Activated naive CD4-positive, alpha-beta T cell treated with anti-CD3 and anti-CD28 coated beads for 36 hours (primary cell): ENCODE measurements at regions of chr11 and their contacts with region 1.

Region 1: DNA sequence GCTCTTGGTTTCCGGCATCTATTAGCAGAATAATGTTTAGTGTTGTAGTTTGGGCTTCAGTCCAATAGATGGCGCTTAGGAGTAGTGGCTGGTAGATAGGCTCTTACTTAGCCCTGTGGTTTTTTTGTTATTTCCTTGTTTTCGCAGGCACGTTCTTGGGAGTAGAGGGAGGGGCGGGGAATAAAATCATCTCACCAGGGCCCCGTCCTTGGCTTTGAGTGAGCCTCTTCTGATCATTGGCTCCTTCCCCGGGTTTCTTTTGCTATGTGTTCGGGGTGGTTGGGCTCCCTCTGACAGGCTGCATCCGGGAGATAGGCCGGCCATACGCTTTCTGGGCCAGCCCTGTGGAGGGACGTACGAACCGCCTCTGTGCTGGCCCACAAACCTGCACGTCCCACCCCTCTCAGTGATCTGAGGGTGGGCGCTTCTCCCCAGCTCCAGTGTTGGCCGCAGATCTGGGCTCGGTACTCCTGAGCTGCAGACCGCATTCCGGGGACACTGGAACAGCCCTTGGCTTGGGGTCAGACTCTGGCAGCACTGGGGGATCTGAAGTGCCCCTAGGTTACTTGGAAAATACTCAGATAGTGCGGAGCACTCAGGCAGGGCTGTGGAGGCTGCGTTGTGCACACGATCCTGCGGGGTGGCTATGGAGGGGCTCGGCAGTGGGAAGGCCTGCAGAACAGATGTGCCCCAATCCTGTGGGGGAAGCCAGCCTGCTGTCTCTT is 217.0 kb downstream of the DYNC2H1 start:
- DNase-seq: peak; percentile 37
- H3K4me3 Mint-ChIP-seq: no peak overlapping the region
- H3K27ac Mint-ChIP-seq: no peak overlapping the region
- H3K4me1 Mint-ChIP-seq: peaks cover 4% of the 10 kb centered on the region
- H3K27me3 Mint-ChIP-seq: peaks cover 5% of the 10 kb centered on the region

Region 2: GRCh38 chr11:103108933-103109817 is 217.1 kb before region 1 on chr11 and contains the start of gene DYNC2H1:
- CTCF ChIA-PET with region 1: no interaction called
- intact Hi-C with region 1: loop called (anchors 5 kb)
- DNase-seq: peak; percentile 90
- H3K4me3 Mint-ChIP-seq: peak within 1 kb of the TSS; percentile 84
- H3K27ac Mint-ChIP-seq: peak within 1 kb of the TSS; percentile 72
- H3K4me1 Mint-ChIP-seq: peaks cover 7% of the 10 kb centered on the region
- H3K27me3 Mint-ChIP-seq: no peaks in the 10 kb centered on the region
- total RNA-seq, gene DYNC2H1: 1.9 to 2.8 TPM

Region 3: DNA sequence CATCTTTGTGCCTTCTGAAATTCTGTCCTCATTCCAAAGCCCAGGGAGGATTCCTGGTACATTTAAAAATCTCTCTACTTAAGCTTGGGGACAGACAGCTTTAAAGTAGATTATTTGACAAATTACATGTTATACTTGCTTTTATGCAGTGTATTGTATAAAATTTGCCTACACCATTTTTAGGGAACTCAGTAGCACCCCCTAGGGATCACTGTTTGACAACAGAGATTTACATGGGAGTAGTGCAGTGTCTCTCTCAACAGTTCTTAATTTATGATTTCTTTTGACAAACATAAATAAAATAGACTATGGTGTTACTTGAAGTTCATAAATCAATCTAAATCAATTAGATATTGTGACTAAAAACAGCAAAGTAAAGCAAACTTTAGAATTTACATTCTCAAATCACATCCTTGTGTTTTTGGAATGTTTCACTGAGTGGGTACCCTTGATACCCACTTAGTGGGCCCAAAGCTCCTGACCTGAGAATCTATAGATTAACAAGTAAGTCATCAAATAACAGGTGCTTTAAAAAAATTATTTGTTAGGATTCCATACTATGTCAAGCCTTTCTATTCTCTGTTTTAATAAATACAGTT is 211.8 kb after region 1 on chr11:
- CTCF ChIA-PET with region 1: no interaction called
- intact Hi-C with region 1: loop called (anchors 2 kb)
- DNase-seq: no peak
- H3K4me3 Mint-ChIP-seq: no peak overlapping the region
- H3K27ac Mint-ChIP-seq: no peak overlapping the region
- H3K4me1 Mint-ChIP-seq: no peaks in the 10 kb centered on the region
- H3K27me3 Mint-ChIP-seq: peaks cover 6% of the 10 kb centered on the region